Psoas muscle (tissue), 8 donors: ENCODE measurements at regions of chr10 and their contacts with region 1.

Region 1: DNA sequence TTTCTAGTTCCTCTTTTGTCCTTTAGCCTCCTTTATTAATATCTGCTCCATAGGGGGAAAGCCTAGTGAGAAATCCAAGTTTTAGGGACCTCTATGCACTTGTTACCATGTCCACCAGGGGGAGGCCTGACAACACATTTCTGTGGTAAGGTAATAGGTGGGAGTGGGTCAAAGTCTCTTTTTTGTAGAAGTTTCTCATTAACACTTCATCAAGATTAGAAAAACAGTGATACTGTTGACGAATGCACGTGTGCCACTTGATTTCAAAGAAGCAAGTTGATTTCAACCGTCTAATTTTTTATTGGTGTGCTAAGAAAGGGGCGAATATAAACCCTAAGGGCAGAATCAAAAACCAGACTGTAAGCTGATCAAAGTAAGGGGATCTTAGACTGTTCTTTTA is 30.6 kb downstream of the CISD1 start:
- DNase-seq: peak in 1 of 2 donors; percentile 27
- ATAC-seq: peak; percentile 76 to 91 (median 80)
- H3K4me3 ChIP-seq: no peak overlapping the region
- H3K27ac ChIP-seq: no peak overlapping the region
- H3K4me1 ChIP-seq: no peaks in the 10 kb centered on the region
- H3K27me3 ChIP-seq: no peaks in the 10 kb centered on the region
- CTCF ChIP-seq: peak; percentile 83

Region 2: DNA sequence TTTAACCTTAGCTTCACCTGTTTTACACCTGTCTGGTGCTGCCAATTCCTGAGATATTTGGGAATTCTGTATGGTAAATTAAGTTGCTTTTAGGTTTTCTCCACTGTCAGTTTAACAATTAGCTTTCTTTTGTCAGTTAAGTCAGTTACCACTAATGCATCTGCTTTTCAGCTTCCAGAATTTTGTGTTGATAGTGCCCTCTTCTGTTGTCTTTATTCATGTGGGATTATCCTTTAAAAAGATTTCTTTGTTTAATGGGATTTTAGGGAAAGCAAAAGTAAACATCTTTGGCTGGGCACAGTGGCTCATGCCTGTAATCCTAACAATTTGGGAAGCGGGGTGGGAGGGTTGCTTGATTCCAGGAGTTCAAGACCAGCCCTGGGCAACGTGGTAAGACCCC is 93.7 kb after region 1 on chr10:
- intact Hi-C with region 1: loop called in 1 of 2 experiments (anchors 5 kb)
- DNase-seq: no peak
- ATAC-seq: no peak
- H3K4me3 ChIP-seq: no peak overlapping the region
- H3K27ac ChIP-seq: no peak overlapping the region
- H3K4me1 ChIP-seq: no peaks in the 10 kb centered on the region
- H3K27me3 ChIP-seq: no peaks in the 10 kb centered on the region
- CTCF ChIP-seq: no peak